ENCODE measurements at regions of chr15 and their contacts with region 1.

Region 1: DNA sequence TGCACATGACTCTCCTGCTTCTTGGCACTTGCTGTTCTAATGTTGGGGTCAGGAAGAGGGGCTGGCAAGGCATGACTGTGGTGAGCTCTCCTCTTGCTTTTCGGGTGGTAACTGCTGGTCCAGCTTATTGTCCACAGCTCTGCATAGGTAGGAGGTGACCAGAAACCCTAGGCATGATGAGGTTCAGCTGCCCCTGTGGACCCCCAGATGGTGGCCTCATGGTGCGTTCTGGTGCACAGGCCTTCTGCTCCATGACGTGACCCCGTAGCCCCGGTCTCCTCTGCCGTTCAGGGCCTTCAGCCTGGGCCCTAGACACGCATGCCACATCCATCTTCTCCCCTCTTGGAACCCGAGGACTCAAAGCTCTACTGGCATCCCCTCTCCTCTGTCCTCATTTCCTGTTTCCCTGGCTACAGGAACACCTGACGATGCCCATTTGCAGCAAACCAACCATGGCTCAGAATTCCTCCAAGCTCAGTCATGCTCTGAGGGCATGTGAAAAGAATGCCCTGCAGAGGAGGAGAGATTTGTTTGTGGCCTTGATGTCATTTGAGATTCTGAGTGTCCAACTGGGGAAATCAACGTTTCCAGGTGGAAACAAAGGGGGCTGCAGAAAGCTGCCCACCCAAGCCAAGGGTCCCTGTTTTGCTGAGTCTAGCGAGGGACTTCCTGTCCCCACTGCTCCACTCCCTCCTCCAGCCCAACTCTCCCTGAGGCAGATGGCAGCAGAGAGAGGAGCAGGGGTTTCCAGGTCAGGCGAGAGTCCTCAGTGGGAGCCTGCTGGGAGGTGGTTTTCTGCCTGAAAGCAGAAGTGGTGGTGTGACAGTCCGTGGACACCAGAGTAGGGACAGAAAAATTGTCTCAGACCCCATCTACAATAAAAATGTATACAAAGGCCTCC is 198.7 kb upstream of the LYSMD4 start:
- DNase-seq: peak in 1 of 10 donors; percentile 38

Region 2: GRCh38 chr15:100520132-100520921 is 588.4 kb after region 1 on chr15:
- intact Hi-C with region 1: no loop called
- DNase-seq: no peak

Region 3: DNA sequence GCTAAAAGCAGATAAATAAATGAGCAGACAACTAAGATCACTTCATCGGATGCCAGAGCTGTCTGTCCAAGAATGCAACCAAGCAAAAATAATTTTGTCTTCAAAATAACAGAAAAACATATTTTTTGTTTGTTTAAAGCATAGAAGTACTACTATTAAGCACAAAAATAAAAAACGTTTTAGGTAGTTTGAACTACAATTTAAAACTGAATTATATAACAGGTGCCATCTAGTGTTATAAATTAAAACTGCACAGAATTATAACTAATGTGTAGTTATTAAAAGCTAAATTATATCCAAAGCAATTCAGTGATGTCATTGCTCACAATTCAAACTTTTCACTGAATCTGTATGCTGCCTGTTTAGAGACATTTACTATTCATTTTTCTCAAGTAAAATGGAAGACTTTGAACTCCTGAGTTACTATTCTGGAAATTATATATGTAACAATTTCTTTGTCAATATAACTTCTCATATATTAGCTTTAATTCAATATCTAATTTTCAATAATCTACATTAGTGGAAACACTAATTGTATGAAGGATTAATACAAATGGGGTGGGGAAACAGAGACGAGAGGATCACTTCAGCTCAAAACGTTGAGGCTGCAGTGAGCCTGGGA is 640.5 kb after region 1 on chr15:
- intact Hi-C with region 1: loop called (anchors 10 kb)
- DNase-seq: no peak